Activated CD8-positive, alpha-beta T cell treated with anti-CD3 and anti-CD28 coated beads for 36 hours (primary cell): ENCODE measurements at regions of chr17 and their contacts with region 1.

Region 1: GRCh38 chr17:8073627-8074484 is 13.7 kb downstream of the ALOX12B start:
- DNase-seq: peak; percentile 88
- ATAC-seq: peak; percentile 92
- H3K4me3 Mint-ChIP-seq: peak overlapping the region; percentile 69
- H3K27ac Mint-ChIP-seq: peak overlapping the region; percentile 46
- H3K4me1 Mint-ChIP-seq: peaks cover 19% of the 10 kb centered on the region
- H3K27me3 Mint-ChIP-seq: peaks cover 39% of the 10 kb centered on the region
- CTCF ChIP-seq: peak; percentile 86

Region 2: GRCh38 chr17:7969433-7969832 is 104.4 kb before region 1 on chr17:
- CTCF ChIA-PET with region 1: no interaction called
- POLR2A ChIA-PET with region 1: no interaction called
- intact Hi-C with region 1: no loop called
- DNase-seq: no peak
- ATAC-seq: no peak
- H3K4me3 Mint-ChIP-seq: no peak overlapping the region
- H3K27ac Mint-ChIP-seq: no peak overlapping the region
- H3K4me1 Mint-ChIP-seq: no peaks in the 10 kb centered on the region
- H3K27me3 Mint-ChIP-seq: peaks cover 4% of the 10 kb centered on the region
- CTCF ChIP-seq: no peak

Region 3: GRCh38 chr17:8016632-8017478 is 57.0 kb before region 1 on chr17:
- CTCF ChIA-PET with region 1: interaction called, 15 read pairs
- POLR2A ChIA-PET with region 1: no interaction called
- intact Hi-C with region 1: no loop called
- DNase-seq: peak; percentile 77
- ATAC-seq: peak; percentile 92
- H3K4me3 Mint-ChIP-seq: peak overlapping the region; percentile 64
- H3K27ac Mint-ChIP-seq: no peak overlapping the region
- H3K4me1 Mint-ChIP-seq: peaks cover 11% of the 10 kb centered on the region
- H3K27me3 Mint-ChIP-seq: peaks cover 14% of the 10 kb centered on the region
- CTCF ChIP-seq: peak; percentile 85

Region 4: DNA sequence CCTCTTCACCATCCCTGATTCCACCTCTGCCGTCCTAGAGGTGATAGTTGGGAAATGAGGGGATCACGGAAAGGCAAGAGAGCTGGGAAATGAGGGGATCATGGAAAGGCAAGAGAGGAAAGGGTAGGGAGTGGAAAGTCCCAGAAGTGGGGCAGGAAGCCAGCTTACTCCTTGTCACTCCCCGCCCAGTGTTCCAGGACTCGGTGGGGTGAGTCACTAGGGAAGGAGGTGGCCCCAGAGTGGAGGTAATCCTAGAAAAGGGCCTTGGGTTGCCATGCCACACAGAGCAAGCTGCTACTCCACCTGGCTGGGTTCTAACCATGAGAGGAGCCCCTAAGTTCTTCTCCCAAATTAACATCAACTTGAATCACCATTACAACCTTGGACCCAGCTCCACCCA is 29.7 kb after region 1 on chr17:
- CTCF ChIA-PET with region 1: interaction called, 110 read pairs
- POLR2A ChIA-PET with region 1: interaction called, 3 read pairs
- intact Hi-C with region 1: no loop called
- DNase-seq: no peak
- ATAC-seq: no peak
- H3K4me3 Mint-ChIP-seq: no peak overlapping the region
- H3K27ac Mint-ChIP-seq: no peak overlapping the region
- H3K4me1 Mint-ChIP-seq: no peaks in the 10 kb centered on the region
- H3K27me3 Mint-ChIP-seq: no peaks in the 10 kb centered on the region
- CTCF ChIP-seq: no peak

Region 5: GRCh38 chr17:8109661-8110464 is 36.0 kb after region 1 on chr17:
- CTCF ChIA-PET with region 1: interaction called, 110 read pairs
- POLR2A ChIA-PET with region 1: interaction called, 3 read pairs
- intact Hi-C with region 1: loop called (anchors 5 kb)
- DNase-seq: peak; percentile 87
- ATAC-seq: peak; percentile 98
- H3K4me3 Mint-ChIP-seq: peak overlapping the region; percentile 19
- H3K27ac Mint-ChIP-seq: no peak overlapping the region
- H3K4me1 Mint-ChIP-seq: no peaks in the 10 kb centered on the region
- H3K27me3 Mint-ChIP-seq: peaks cover 15% of the 10 kb centered on the region
- CTCF ChIP-seq: peak; percentile 98

Region 6: GRCh38 chr17:8143764-8144719 is 70.2 kb after region 1 on chr17:
- CTCF ChIA-PET with region 1: no interaction called
- POLR2A ChIA-PET with region 1: no interaction called
- intact Hi-C with region 1: no loop called
- DNase-seq: no peak
- ATAC-seq: no peak
- H3K4me3 Mint-ChIP-seq: no peak overlapping the region
- H3K27ac Mint-ChIP-seq: no peak overlapping the region
- H3K4me1 Mint-ChIP-seq: no peaks in the 10 kb centered on the region
- H3K27me3 Mint-ChIP-seq: no peaks in the 10 kb centered on the region
- CTCF ChIP-seq: no peak

Region 7: GRCh38 chr17:8173056-8173870 is 99.4 kb after region 1 on chr17:
- CTCF ChIA-PET with region 1: no interaction called
- POLR2A ChIA-PET with region 1: no interaction called
- intact Hi-C with region 1: no loop called
- DNase-seq: peak; percentile 96
- ATAC-seq: peak; percentile 86
- H3K4me3 Mint-ChIP-seq: peak overlapping the region; percentile 89
- H3K27ac Mint-ChIP-seq: peak overlapping the region; percentile 100
- H3K4me1 Mint-ChIP-seq: peaks cover 39% of the 10 kb centered on the region
- H3K27me3 Mint-ChIP-seq: no peaks in the 10 kb centered on the region
- CTCF ChIP-seq: no peak